Activated CD8-positive, alpha-beta memory T cell treated with anti-CD3 and anti-CD28 coated beads, Interleukin-2, amount 10 ng/mL, durations not matched to agents 7 days and 5 days (primary cell): ENCODE measurements at regions of chr11 and their contacts with region 1.

Region 1: DNA sequence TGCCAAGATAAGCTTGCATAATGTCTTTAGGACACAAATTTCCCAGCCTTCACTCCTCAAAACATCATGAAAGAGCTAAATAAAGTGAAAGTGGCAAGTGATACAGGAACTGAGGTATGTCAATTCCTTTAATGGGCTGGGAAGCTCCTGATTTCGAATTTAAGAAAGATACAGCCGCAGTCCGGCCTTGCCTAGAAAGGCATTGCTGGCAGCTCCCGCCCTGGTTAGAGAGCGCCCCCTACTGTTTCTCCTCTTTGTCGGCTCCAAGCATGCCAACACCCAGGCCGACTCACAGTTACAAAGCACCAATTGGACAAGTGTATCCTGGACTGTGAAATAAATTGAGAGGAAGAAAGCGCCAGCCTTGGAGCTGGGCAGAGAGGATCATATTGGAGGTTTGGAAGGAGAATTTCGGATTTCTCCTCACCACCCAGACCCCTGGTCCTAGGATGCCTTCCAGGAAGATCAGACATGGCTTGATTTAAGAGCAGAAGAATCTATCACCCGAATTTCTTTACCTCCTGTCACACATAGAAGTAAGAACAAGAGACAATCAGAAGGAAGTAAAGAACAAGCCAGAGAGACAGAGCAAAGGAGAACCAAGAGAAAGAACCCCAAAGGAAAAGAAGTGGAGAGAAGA is 84.0 kb downstream of the FAM76B start:
- DNase-seq: peak; percentile 88
- ATAC-seq: peak; percentile 94
- H3K4me3 Mint-ChIP-seq: no peak overlapping the region
- H3K27ac Mint-ChIP-seq: no peak overlapping the region
- H3K4me1 Mint-ChIP-seq: peaks cover 7% of the 10 kb centered on the region
- H3K27me3 Mint-ChIP-seq: peaks cover 8% of the 10 kb centered on the region

Region 2: DNA sequence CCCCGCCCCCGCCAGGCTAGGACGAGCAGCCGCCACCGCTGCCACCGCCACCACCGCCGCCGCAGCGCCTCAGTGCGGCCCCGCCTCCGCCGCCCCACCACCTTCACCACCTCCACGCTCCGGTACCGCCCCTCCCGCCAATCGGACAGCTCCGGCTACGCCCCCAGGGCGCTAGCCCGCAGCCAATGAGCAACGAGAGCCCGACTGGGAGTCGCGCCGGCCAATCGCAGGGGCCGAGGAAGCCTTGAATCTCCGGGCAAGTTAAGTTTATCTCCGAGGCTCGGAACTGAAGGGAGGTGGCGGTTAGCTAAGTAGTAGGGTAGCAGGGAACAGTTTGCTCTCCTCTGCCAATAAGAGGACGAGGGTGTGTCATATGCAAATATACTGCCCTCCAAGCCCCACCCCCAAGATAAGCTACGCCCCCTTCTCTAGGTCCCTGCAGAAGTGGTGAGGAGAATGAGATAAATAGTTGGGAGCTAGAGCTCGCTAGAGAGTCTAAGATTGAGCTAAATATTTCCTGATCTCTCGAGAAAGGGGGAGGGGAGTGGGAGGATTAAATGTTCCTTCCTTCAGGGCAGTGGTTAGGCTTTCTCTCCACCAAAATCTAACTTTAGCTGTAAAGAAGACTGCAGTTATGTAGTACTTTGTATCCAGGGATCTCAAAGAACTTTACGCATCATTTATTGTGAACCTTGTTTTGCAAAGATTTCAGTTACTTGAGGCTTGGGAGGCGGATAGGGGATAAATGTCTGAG is 474.3 kb before region 1 on chr11 and contains the start of gene SESN3:
- CTCF ChIA-PET with region 1: interaction called, 14 read pairs
- DNase-seq: peak; percentile 99
- ATAC-seq: peak; percentile 95
- H3K4me3 Mint-ChIP-seq: peak within 1 kb of the TSS; percentile 84
- H3K27ac Mint-ChIP-seq: peak within 1 kb of the TSS; percentile 75
- H3K4me1 Mint-ChIP-seq: peaks cover 24% of the 10 kb centered on the region
- H3K27me3 Mint-ChIP-seq: peaks cover 16% of the 10 kb centered on the region
- total RNA-seq, gene SESN3: 9.3 to 24.3 TPM

Region 3: GRCh38 chr11:95692526-95693260 is 12.9 kb before region 1 on chr11:
- CTCF ChIA-PET with region 1: interaction called, 35 read pairs
- DNase-seq: no peak
- ATAC-seq: no peak
- H3K4me3 Mint-ChIP-seq: no peak overlapping the region
- H3K27ac Mint-ChIP-seq: no peak overlapping the region
- H3K4me1 Mint-ChIP-seq: peaks cover 10% of the 10 kb centered on the region
- H3K27me3 Mint-ChIP-seq: no peaks in the 10 kb centered on the region

Region 4: DNA sequence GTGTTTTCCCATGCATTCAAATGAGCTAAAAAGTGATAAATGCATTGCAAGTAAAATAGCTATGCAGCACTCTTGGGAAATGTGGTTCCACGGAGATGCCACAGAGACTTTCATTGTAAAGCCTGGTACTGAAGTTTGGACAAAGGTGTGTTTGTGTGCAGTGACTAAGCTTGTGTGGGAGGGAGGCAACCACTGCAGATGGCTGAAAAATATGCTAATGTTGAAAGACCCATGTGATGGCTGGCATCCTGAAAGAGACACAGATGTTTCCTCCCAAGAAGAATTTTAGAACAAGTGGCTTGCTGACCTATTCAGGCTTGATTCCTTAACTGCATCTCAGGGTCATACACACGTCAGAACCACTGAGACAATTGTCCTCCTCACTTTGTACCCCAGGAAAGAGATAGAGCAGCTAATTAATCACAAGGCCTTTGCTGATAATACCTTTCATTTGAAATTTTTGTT is 10.2 kb after region 1 on chr11:
- CTCF ChIA-PET with region 1: interaction called, 12 read pairs
- DNase-seq: no peak
- ATAC-seq: peak; percentile 39
- H3K4me3 Mint-ChIP-seq: no peak overlapping the region
- H3K27ac Mint-ChIP-seq: no peak overlapping the region
- H3K4me1 Mint-ChIP-seq: peaks cover 27% of the 10 kb centered on the region
- H3K27me3 Mint-ChIP-seq: peaks cover 10% of the 10 kb centered on the region